ENCODE measurements at regions of chr2 and their contacts with region 1.

Region 1: DNA sequence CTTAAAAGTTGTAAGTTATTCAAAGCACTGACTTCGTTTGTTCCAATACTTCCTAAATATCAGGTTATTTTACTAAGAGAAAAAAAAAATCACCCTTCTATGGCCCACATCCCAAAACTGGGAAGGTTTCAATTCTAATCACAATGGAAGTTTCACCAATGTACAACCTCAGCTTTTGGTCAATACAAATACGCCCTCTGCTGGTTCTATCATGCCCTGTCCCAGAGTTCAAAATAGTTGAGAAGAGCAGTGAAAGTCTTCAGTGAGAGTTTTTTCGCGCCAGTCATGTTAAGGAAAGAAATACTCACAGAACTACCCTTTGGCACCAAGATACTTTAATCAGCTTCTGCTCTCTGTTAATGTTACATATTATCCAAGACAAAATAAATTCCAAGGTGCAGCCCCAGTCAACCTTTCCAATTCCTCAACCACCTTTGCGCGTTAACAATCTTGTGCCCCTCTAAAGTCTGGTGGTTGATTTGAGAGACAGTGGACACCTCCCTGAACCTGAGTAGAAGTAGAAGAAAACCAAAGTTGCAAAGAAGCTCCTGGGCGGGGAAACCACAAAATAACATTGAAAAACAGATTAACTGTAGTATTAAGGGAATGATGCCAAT is 59.9 kb downstream of the SUMO1 start:
- DNase-seq: peak in 1 of 2 donors; percentile 78
- H3K4me3 ChIP-seq: no peak overlapping the region
- H3K27ac ChIP-seq: no peak overlapping the region
- H3K4me1 ChIP-seq: no peaks in the 10 kb centered on the region
- H3K27me3 ChIP-seq: no peaks in the 10 kb centered on the region
- CTCF ChIP-seq: peak; percentile 72 to 79 (median 78)

Region 2: GRCh38 chr2:201860636-201861066 is 317.8 kb before region 1 on chr2:
- intact Hi-C with region 1: loop called (anchors 1 kb)
- DNase-seq: no peak
- H3K4me3 ChIP-seq: no peak overlapping the region
- H3K27ac ChIP-seq: no peak overlapping the region
- H3K4me1 ChIP-seq: no peaks in the 10 kb centered on the region
- H3K27me3 ChIP-seq: no peaks in the 10 kb centered on the region
- CTCF ChIP-seq: peak; percentile 65 to 81 (median 68)

Region 3: DNA sequence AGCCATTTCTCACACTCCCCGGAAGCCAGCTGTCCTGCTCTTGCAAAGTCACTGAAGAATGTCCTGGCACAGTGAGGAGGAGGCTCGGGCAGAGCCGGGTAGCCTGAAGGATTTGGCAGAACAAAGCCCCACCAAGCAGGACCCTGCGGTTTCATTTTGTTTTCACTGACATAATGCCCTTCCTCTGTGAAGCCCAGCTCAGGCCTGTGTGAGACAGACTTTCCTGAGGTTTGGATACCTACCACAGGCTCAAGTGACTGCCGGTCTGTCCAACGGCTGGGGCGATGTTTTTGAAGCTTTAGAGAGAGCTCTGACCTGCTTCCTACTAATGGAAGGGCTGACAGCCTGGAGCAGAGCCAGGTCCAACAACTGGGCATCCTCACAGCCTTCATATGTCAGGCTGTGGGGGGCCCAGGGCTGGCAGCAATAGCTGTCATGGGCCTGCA is 244.6 kb before region 1 on chr2:
- intact Hi-C with region 1: no loop called
- DNase-seq: no peak
- H3K4me3 ChIP-seq: no peak overlapping the region
- H3K27ac ChIP-seq: no peak overlapping the region
- H3K4me1 ChIP-seq: no peaks in the 10 kb centered on the region
- H3K27me3 ChIP-seq: no peaks in the 10 kb centered on the region
- CTCF ChIP-seq: no peak

Region 4: DNA sequence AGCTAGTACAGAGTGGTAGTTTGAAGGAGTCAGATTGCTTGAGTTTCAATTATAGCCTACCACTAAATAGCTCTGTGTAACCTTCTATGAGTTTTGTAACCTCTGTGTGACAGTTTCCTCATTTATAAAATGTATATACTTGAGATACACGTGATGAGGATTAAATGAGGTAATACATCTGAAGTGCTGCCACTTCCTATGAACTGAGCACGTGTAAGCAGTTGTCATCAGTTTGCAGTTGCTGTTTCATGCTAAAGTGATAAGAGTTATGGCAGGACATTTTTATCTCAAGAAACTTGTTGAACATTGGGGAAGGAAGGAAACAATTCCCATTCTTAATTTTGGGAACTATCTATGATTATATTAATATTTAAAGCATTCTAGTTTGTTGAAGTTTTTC is 772.1 kb after region 1 on chr2:
- intact Hi-C with region 1: no loop called
- DNase-seq: no peak
- H3K4me3 ChIP-seq: no peak overlapping the region
- H3K27ac ChIP-seq: no peak overlapping the region
- H3K4me1 ChIP-seq: no peaks in the 10 kb centered on the region
- H3K27me3 ChIP-seq: no peaks in the 10 kb centered on the region
- CTCF ChIP-seq: no peak

Measured in ascending aorta (tissue), 2 donors.